Mammary epithelial cell (primary cell): ENCODE measurements at regions of chr12 and their contacts with region 1.

Region 1: DNA sequence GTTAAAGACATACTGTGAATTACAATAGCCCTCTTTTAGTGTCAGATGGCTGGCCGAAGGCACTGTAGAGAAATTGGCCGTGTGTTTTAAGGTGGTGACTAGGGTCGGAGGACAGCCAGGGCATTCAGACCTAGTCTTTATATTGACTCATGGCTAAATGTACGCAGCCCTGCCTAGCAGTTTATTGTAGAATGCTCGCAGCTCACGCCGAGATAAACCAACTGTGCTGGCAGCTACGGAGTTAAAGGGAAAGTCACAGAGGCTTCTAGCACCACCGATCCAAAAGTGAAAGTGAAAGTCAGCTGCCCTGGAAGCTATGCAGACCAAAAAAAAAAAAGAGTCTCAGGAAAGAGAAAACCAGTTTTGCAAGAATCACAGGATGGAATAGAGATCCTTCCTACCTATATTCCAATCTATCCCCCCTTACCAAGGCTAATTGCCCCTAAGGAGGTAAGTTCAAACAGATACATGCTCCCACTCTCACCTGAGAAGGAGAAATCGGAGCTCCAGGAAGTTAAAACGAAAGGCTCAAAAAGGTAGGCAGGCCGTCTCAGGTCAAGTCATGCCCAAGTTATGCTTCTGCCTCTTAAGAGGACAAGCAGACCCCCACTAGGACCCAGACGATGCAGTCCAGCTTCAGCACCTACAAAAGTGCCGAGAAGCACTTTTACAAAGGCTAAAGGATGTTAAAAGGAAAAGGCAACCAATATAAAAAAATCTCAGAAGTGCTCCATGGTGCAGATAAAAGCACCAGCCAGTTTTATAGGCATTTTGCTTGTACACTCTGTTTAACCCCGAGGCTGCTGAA is 24.8 kb downstream of the KLRK1 start:
- DNase-seq: peak; percentile 83
- H3K4me3 ChIP-seq: peak overlapping the region; percentile 52 to 65 (median 61)
- H3K27ac ChIP-seq: peak overlapping the region; percentile 90
- H3K4me1 ChIP-seq: peaks cover 51% of the 10 kb centered on the region
- H3K27me3 ChIP-seq: no peaks in the 10 kb centered on the region
- CTCF ChIP-seq: no peak

Region 2: GRCh38 chr12:10320643-10321042 is 44.4 kb before region 1 on chr12:
- CTCF ChIA-PET with region 1: no interaction called
- dilution Hi-C with region 1: no loop called
- in situ Hi-C with region 1: no loop called
- intact Hi-C with region 1: no loop called
- DNase-seq: no peak
- H3K4me3 ChIP-seq: no peak overlapping the region
- H3K27ac ChIP-seq: no peak overlapping the region
- H3K4me1 ChIP-seq: no peaks in the 10 kb centered on the region
- H3K27me3 ChIP-seq: no peaks in the 10 kb centered on the region
- CTCF ChIP-seq: no peak

Region 3: GRCh38 chr12:10331642-10332239 is 33.3 kb before region 1 on chr12:
- CTCF ChIA-PET with region 1: no interaction called
- dilution Hi-C with region 1: no loop called
- in situ Hi-C with region 1: no loop called
- intact Hi-C with region 1: loop called (anchors 1 kb)
- DNase-seq: peak; percentile 36
- H3K4me3 ChIP-seq: no peak overlapping the region
- H3K27ac ChIP-seq: no peak overlapping the region
- H3K4me1 ChIP-seq: no peaks in the 10 kb centered on the region
- H3K27me3 ChIP-seq: no peaks in the 10 kb centered on the region
- CTCF ChIP-seq: peak; percentile 81 to 89

Region 4: GRCh38 chr12:10341892-10342509 is 23.0 kb before region 1 on chr12:
- CTCF ChIA-PET with region 1: no interaction called
- dilution Hi-C with region 1: no loop called
- in situ Hi-C with region 1: no loop called
- intact Hi-C with region 1: no loop called
- DNase-seq: peak; percentile 24
- H3K4me3 ChIP-seq: no peak overlapping the region
- H3K27ac ChIP-seq: no peak overlapping the region
- H3K4me1 ChIP-seq: peaks cover 7% of the 10 kb centered on the region
- H3K27me3 ChIP-seq: no peaks in the 10 kb centered on the region
- CTCF ChIP-seq: no peak

Region 5: DNA sequence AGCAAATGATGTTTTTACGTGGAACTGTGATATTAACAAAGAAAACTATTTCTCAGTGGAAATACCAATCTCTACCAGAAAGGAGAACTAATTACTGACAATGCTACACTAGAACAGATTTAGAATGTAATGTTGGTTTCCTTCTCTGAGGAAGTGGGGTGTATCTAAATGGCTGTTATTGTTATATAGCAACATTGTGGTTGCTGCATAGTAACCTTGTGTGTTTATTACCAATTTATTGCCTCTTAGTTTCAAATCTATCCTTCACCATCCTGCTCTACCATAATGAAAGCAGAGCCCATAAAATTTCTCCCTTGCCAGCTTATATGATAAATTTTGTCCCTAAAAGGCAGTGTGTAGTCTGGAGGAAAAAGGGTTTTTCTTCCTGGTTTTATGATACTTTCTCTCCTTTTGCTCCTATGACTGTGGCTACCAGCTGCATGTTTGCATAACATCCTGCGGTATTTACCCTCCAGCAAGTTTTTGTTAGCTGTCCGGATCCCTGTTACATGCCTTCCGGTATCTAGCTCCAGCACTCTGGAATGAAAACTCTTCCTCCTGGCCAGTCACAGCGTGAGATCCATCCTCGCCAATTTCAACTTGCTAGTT is 30.5 kb after region 1 on chr12:
- CTCF ChIA-PET with region 1: interaction called, 28 read pairs
- dilution Hi-C with region 1: no loop called
- in situ Hi-C with region 1: no loop called
- intact Hi-C with region 1: loop called (anchors 2 kb)
- DNase-seq: peak; percentile 91
- H3K4me3 ChIP-seq: no peak overlapping the region
- H3K27ac ChIP-seq: peak overlapping the region; percentile 99
- H3K4me1 ChIP-seq: peaks cover 37% of the 10 kb centered on the region
- H3K27me3 ChIP-seq: no peaks in the 10 kb centered on the region
- CTCF ChIP-seq: no peak

Region 6: DNA sequence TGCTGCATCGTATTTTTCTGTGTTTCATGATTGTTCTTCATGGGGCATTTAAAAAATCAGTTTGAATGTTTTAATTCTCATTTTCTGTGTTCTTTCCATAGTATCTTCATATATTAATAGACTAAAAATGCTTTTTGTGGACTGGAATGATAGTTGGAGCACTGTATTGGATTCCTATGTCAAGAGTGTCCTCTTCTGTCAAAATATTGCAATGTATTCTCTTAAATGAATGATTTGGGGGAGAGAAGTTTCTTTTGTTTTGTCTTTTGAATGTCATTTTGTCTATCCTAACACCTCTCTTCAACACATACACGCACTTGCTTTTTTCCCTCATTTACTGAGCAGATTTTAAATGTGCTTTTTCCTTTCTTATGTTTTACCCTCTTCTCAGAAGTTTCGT is 136.0 kb after region 1 on chr12:
- CTCF ChIA-PET with region 1: no interaction called
- dilution Hi-C with region 1: no loop called
- in situ Hi-C with region 1: no loop called
- intact Hi-C with region 1: loop called (anchors 1 kb)
- DNase-seq: peak; percentile 9
- H3K4me3 ChIP-seq: no peak overlapping the region
- H3K27ac ChIP-seq: no peak overlapping the region
- H3K4me1 ChIP-seq: no peaks in the 10 kb centered on the region
- H3K27me3 ChIP-seq: peaks cover 4% of the 10 kb centered on the region
- CTCF ChIP-seq: peak; percentile 40 to 67

Region 7: DNA sequence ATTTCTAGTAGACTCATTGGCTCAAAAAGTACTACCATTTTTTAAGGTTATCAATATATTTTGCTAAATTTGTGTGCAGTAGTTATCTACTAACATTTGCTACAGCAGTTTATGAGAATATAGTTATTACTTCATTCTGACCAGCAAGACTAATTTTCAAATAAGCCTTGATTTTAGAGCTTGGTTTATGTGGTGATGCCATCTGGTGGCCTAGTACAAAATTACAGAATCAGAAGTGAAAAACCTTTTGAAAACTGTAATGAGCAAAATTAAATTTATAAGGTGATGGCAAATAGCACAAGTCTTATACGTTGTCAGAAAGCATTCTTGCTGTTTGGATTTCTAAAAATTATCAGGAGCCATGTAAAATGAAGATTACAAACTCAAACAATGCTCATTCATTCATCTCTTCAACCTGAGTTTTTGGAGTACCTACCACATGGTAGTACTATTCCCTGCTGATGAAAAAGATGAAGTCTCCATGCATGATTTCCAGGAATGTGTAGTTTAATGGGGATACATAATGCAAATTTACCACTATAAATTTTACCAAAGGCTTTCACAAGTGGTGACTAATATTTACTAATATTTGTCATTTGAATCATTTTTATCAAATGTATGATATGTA is 197.4 kb after region 1 on chr12:
- CTCF ChIA-PET with region 1: no interaction called
- dilution Hi-C with region 1: no loop called
- in situ Hi-C with region 1: no loop called
- intact Hi-C with region 1: loop called (anchors 1 kb)
- DNase-seq: peak; percentile 20
- H3K4me3 ChIP-seq: no peak overlapping the region
- H3K27ac ChIP-seq: no peak overlapping the region
- H3K4me1 ChIP-seq: no peaks in the 10 kb centered on the region
- H3K27me3 ChIP-seq: no peaks in the 10 kb centered on the region
- CTCF ChIP-seq: peak; percentile 64

Region 8: GRCh38 chr12:10721651-10722501 is 356.9 kb after region 1 on chr12:
- CTCF ChIA-PET with region 1: no interaction called
- dilution Hi-C with region 1: no loop called
- in situ Hi-C with region 1: no loop called
- intact Hi-C with region 1: loop called (anchors 10 kb)
- DNase-seq: peak; percentile 97
- H3K4me3 ChIP-seq: peak overlapping the region; percentile 71 to 81 (median 75)
- H3K27ac ChIP-seq: peak overlapping the region; percentile 98
- H3K4me1 ChIP-seq: peaks cover 45% of the 10 kb centered on the region
- H3K27me3 ChIP-seq: no peaks in the 10 kb centered on the region
- CTCF ChIP-seq: no peak